Activated CD4-positive, alpha-beta T cell treated with anti-CD3 and anti-CD28 coated beads for 36 hours (primary cell): ENCODE measurements at regions of chr21 and their contacts with region 1.

Region 1: GRCh38 chr21:26421724-26422123 is 151.4 kb downstream of the CYYR1 start:
- DNase-seq: no peak
- ATAC-seq: peak; percentile 47
- H3K4me3 Mint-ChIP-seq: no peak overlapping the region
- H3K27ac Mint-ChIP-seq: no peak overlapping the region
- H3K4me1 Mint-ChIP-seq: no peaks in the 10 kb centered on the region
- H3K27me3 Mint-ChIP-seq: no peaks in the 10 kb centered on the region

Region 2: DNA sequence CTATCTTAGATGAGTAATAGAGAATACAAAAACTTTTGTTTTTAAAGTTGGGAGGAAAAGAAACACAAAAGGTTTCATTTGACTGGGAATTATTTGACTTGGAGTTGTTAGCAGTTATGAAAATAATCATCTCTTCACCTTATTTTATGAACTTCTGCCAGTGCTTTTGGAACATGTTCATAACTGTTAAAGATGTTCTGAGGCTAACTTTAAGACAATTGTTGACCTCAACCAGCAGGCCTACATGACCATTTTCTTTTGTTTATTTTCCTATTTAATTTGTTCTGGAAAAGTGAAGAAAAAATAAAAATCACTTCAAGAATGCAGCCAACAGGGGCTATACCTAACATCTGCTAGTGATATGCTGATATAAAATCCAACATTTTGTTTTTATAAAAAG is 745.3 kb before region 1 on chr21:
- CTCF ChIA-PET with region 1: no interaction called
- POLR2A ChIA-PET with region 1: no interaction called
- intact Hi-C with region 1: no loop called
- DNase-seq: no peak
- ATAC-seq: no peak
- H3K4me3 Mint-ChIP-seq: no peak overlapping the region
- H3K27ac Mint-ChIP-seq: no peak overlapping the region
- H3K4me1 Mint-ChIP-seq: no peaks in the 10 kb centered on the region
- H3K27me3 Mint-ChIP-seq: peaks cover 2% of the 10 kb centered on the region

Region 3: DNA sequence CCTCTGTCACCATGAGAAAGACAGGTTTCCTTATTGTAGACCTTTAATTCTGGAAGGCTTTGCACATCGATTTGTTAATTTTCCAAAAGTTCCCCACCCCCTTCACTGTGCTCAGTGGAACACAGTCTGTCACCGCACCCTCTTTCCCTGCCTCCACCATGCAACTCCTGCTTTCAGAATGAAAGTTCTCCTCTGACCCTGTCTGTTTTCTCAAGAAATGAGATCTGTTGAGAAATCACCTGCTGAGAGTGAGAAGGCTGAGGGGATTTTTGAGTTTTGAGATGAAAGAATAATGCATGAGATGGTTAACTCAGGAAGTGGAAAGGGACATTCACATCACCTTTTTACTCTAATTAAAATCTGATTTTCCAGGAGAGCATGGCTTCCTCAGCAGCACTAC is 51.7 kb after region 1 on chr21:
- CTCF ChIA-PET with region 1: no interaction called
- POLR2A ChIA-PET with region 1: no interaction called
- intact Hi-C with region 1: loop called in 1 of 2 experiments (anchors 2 kb)
- DNase-seq: peak; percentile 35
- ATAC-seq: peak; percentile 92
- H3K4me3 Mint-ChIP-seq: no peak overlapping the region
- H3K27ac Mint-ChIP-seq: peak overlapping the region; percentile 18
- H3K4me1 Mint-ChIP-seq: peaks cover 19% of the 10 kb centered on the region
- H3K27me3 Mint-ChIP-seq: no peaks in the 10 kb centered on the region